ENCODE measurements at regions of chr4 and their contacts with region 1.

Region 1: GRCh38 chr4:129545599-129546278 is 449.8 kb downstream of the C4orf33 start:
- DNase-seq: peak; percentile 97
- H3K4me3 ChIP-seq: peak overlapping the region in 1 of 3 experiments; percentile 25
- H3K27ac ChIP-seq: peak overlapping the region; percentile 87
- H3K4me1 ChIP-seq: peaks cover 24% of the 10 kb centered on the region
- H3K27me3 ChIP-seq: no peaks in the 10 kb centered on the region
- CTCF ChIP-seq: no peak
- POLR2A ChIP-seq: peak; percentile 26

Region 2: DNA sequence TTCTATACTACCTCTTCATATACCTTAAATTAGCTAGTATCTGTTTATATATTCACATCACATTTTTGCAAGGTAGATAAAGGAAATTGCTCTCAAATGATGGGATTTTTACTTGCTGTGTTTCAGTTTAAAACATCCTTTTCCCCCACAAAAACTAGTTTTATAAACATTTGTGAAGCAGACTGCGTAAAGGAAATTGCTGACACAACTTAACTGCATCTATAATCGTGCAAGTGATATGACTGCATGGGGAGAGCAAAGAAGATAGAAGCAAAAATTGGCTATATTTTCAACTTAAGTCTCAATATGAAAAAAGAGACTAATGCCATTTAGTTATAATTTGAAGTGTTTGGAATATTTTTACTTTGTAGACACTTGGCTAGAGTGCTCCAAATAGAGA is 64.6 kb before region 1 on chr4:
- CTCF ChIA-PET with region 1: no interaction called
- POLR2A ChIA-PET with region 1: no interaction called
- dilution Hi-C with region 1: no loop called
- intact Hi-C with region 1: no loop called
- DNase-seq: no peak
- H3K4me3 ChIP-seq: no peak overlapping the region
- H3K27ac ChIP-seq: no peak overlapping the region
- H3K4me1 ChIP-seq: no peaks in the 10 kb centered on the region
- H3K27me3 ChIP-seq: no peaks in the 10 kb centered on the region
- CTCF ChIP-seq: no peak
- POLR2A ChIP-seq: no peak

Region 3: GRCh38 chr4:129515356-129515755 is 30.4 kb before region 1 on chr4:
- CTCF ChIA-PET with region 1: no interaction called
- POLR2A ChIA-PET with region 1: no interaction called
- dilution Hi-C with region 1: no loop called
- intact Hi-C with region 1: loop called (anchors 1 kb)
- DNase-seq: peak; percentile 90
- H3K4me3 ChIP-seq: no peak overlapping the region
- H3K27ac ChIP-seq: peak overlapping the region; percentile 66
- H3K4me1 ChIP-seq: peaks cover 22% of the 10 kb centered on the region
- H3K27me3 ChIP-seq: no peaks in the 10 kb centered on the region
- CTCF ChIP-seq: no peak
- POLR2A ChIP-seq: peak; percentile 15

Region 4: GRCh38 chr4:129561886-129562285 is 16.1 kb after region 1 on chr4:
- CTCF ChIA-PET with region 1: no interaction called
- POLR2A ChIA-PET with region 1: no interaction called
- dilution Hi-C with region 1: no loop called
- intact Hi-C with region 1: loop called (anchors 1 kb)
- DNase-seq: peak; percentile 75
- H3K4me3 ChIP-seq: no peak overlapping the region
- H3K27ac ChIP-seq: peak overlapping the region; percentile 50
- H3K4me1 ChIP-seq: peaks cover 11% of the 10 kb centered on the region
- H3K27me3 ChIP-seq: no peaks in the 10 kb centered on the region
- CTCF ChIP-seq: no peak
- POLR2A ChIP-seq: no peak